PC-9 (cell line): ENCODE measurements at regions of chr1 and their contacts with region 1.

Region 1: GRCh38 chr1:108118018-108118902 is 81.9 kb downstream of the SLC25A24 start:
- DNase-seq: peak; percentile 65 to 98
- H3K4me3 ChIP-seq: no peak overlapping the region
- H3K27ac ChIP-seq: peak overlapping the region; percentile 27
- H3K4me1 ChIP-seq: peaks cover 21% of the 10 kb centered on the region
- H3K27me3 ChIP-seq: no peaks in the 10 kb centered on the region
- CTCF ChIP-seq: no peak

Region 2: DNA sequence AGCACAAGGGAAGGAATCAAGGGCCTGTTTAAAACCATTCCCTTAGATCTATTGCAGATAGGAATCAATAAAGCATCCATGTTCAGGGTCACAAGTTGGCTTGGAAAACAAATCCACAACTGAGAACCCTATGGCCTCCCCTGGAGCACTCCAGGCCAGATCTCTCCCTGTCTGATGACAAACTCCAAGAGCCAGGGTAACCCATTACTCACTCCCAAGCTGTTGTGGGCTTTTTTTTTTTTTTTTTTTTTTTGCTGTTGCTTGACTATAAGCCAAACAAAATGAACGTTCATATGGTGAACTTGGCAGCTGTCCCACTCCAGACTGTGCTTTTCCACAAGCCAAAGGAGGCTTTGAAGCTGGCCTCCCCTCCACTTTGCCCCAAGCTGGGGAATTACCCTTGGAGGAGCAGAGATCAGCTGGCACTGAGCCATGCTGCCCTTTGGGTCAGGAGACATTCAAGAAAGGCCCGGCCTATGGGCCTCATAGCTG is 117.6 kb before region 1 on chr1:
- CTCF ChIA-PET with region 1: no interaction called
- POLR2A ChIA-PET with region 1: interaction called, 14 read pairs
- intact Hi-C with region 1: no loop called
- DNase-seq: peak; percentile 66 to 75
- H3K4me3 ChIP-seq: no peak overlapping the region
- H3K27ac ChIP-seq: no peak overlapping the region
- H3K4me1 ChIP-seq: peaks cover 20% of the 10 kb centered on the region
- H3K27me3 ChIP-seq: no peaks in the 10 kb centered on the region
- CTCF ChIP-seq: no peak

Region 3: DNA sequence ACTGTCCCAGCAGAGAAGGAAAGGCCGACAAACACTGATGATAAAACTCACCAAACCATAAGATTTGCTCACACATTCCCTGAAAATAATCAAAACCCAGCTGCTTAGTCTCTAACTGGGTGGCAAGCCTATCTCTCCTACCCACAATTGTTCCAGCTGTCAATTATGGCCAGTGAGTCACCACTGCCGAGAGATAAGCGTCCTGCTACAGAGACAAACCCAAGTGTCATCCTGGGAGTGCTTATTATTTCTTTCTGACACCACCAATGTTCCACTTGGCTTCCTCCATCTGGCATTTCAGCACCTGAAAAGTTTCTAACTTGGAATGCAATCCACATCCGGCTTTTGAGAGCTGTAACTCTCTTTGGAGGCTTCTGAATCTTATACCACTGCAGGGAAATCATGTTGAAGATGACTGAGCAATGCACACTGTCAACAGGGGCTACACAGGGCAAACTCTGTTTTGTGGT is 101.8 kb before region 1 on chr1:
- CTCF ChIA-PET with region 1: no interaction called
- POLR2A ChIA-PET with region 1: no interaction called
- intact Hi-C with region 1: loop called (anchors 5 kb)
- DNase-seq: peak; percentile 65 to 85
- H3K4me3 ChIP-seq: no peak overlapping the region
- H3K27ac ChIP-seq: no peak overlapping the region
- H3K4me1 ChIP-seq: peaks cover 28% of the 10 kb centered on the region
- H3K27me3 ChIP-seq: no peaks in the 10 kb centered on the region
- CTCF ChIP-seq: no peak